ENCODE measurements at regions of chr4 and their contacts with region 1.

Region 1: GRCh38 chr4:38730830-38731646 is 51.8 kb downstream of the TLR10 start:
- DNase-seq: peak; percentile 91
- ATAC-seq: peak; percentile 93
- H3K4me3 Mint-ChIP-seq: no peak overlapping the region
- H3K27ac Mint-ChIP-seq: peak overlapping the region; percentile 64
- H3K4me1 Mint-ChIP-seq: peaks cover 15% of the 10 kb centered on the region
- H3K27me3 Mint-ChIP-seq: peaks cover 2% of the 10 kb centered on the region
- CTCF ChIP-seq: peak; percentile 99

Region 2: DNA sequence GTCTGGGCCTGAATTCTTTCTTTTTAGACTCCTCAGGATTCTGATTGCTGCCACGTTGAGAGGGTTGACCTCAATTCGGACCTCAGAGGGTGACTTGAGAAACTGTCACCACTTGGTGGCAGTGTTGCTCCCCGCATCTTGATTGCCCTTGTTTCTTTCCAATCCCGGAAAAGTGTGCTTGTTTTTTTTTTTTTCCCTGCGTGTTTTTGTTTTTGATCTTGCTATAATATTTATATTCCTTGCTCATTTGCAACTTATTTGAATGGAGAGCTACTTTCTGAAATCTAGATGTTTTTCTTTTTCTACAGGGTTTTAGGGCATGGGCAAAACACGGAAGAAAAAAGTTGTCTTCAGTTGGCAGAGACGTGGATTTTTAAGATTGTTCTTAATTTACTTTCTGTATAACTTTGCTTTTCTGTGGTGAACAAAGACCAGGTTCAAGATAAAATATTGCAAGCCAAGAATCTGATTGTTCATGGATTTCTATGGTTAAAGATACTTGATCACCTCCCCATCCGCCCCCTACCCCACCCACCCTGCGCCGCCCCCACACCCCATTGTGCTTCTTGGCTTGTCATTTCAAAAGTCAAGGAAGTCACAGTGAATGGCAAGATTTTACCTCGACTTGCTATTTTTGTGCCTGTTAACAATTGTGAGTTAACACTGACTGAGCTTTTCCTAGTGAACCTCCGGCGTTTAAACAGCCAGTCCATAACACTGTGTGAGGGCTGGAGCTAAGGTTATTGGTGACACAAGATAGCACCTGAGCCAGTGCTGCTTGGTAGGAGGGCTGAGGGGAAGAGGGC is 668.7 kb before region 1 on chr4:
- CTCF ChIA-PET with region 1: interaction called, 7 read pairs
- POLR2A ChIA-PET with region 1: no interaction called
- intact Hi-C with region 1: loop called (anchors 2 kb)
- DNase-seq: peak; percentile 78
- ATAC-seq: peak; percentile 62
- H3K4me3 Mint-ChIP-seq: peak overlapping the region; percentile 60
- H3K27ac Mint-ChIP-seq: peak overlapping the region; percentile 73
- H3K4me1 Mint-ChIP-seq: peaks cover 13% of the 10 kb centered on the region
- H3K27me3 Mint-ChIP-seq: no peaks in the 10 kb centered on the region
- CTCF ChIP-seq: peak; percentile 97

Region 3: GRCh38 chr4:38319456-38320342 is 411.3 kb before region 1 on chr4:
- CTCF ChIA-PET with region 1: interaction called, 3 read pairs
- POLR2A ChIA-PET with region 1: no interaction called
- intact Hi-C with region 1: loop called (anchors 10 kb)
- DNase-seq: peak; percentile 96
- ATAC-seq: peak; percentile 86
- H3K4me3 Mint-ChIP-seq: peak overlapping the region; percentile 76
- H3K27ac Mint-ChIP-seq: peak overlapping the region; percentile 89
- H3K4me1 Mint-ChIP-seq: peaks cover 39% of the 10 kb centered on the region
- H3K27me3 Mint-ChIP-seq: no peaks in the 10 kb centered on the region
- CTCF ChIP-seq: peak; percentile 96

Region 4: DNA sequence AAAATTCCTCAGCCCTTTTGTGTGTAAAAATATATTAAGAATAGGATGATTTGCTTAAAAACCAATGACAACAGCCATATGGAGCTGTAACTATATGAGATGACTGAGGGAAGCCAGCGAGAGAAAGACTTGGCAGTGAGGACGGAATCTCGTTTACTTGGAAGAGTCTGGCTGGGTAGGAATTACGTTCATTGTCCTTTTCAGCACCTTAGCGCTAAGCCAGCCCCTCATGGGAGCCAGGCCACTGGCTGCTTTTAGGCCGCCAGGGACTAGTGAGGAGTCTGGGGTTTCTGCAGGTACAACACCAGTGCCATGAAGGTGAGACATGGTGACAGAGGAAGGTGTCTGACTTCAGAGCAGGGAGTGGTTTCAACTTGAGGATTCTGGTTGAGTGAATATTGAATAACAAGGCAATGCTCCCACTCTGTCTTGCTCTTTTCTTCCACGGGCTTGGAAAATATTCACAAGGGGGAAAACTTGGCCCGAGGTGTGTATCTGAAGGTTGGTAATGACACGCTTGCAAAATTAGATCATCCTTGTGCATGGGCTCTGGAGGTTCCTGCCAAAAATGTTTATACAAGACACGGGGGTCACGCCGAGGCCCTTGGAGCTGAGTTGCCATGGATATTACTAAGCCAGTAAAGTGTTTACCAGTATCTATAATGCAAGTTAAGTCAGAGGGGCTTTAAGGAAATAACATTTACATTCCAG is 49.6 kb before region 1 on chr4:
- CTCF ChIA-PET with region 1: interaction called, 29 read pairs
- POLR2A ChIA-PET with region 1: no interaction called
- intact Hi-C with region 1: loop called (anchors 5 kb)
- DNase-seq: no peak
- ATAC-seq: no peak
- H3K4me3 Mint-ChIP-seq: no peak overlapping the region
- H3K27ac Mint-ChIP-seq: peak overlapping the region; percentile 69
- H3K4me1 Mint-ChIP-seq: peaks cover 71% of the 10 kb centered on the region
- H3K27me3 Mint-ChIP-seq: no peaks in the 10 kb centered on the region
- CTCF ChIP-seq: no peak

Region 5: GRCh38 chr4:38691251-38692008 is 39.6 kb before region 1 on chr4:
- CTCF ChIA-PET with region 1: interaction called, 13 read pairs
- POLR2A ChIA-PET with region 1: no interaction called
- intact Hi-C with region 1: no loop called
- DNase-seq: no peak
- ATAC-seq: no peak
- H3K4me3 Mint-ChIP-seq: no peak overlapping the region
- H3K27ac Mint-ChIP-seq: no peak overlapping the region
- H3K4me1 Mint-ChIP-seq: peaks cover 31% of the 10 kb centered on the region
- H3K27me3 Mint-ChIP-seq: no peaks in the 10 kb centered on the region
- CTCF ChIP-seq: no peak

Region 6: DNA sequence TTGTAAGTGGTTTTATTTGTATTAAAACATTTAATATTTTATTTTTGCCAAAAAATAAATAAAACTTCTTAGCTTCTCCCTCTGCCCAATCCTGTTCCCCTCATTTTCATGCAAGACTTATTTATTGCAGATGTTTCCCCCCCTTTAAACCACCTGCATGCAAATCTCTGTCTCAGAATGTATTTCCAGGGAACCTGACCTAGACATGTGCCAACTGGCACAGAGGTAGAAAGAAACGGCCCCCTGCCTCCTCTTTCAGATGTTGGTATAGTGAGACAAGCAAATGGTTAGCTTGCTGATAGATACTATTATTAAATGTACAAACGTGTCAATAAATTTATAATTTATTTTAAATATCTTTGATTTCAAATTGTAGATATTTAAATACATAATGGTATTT is 20.0 kb before region 1 on chr4:
- CTCF ChIA-PET with region 1: interaction called, 11 read pairs
- POLR2A ChIA-PET with region 1: no interaction called
- intact Hi-C with region 1: no loop called
- DNase-seq: no peak
- ATAC-seq: no peak
- H3K4me3 Mint-ChIP-seq: no peak overlapping the region
- H3K27ac Mint-ChIP-seq: no peak overlapping the region
- H3K4me1 Mint-ChIP-seq: peaks cover 11% of the 10 kb centered on the region
- H3K27me3 Mint-ChIP-seq: no peaks in the 10 kb centered on the region
- CTCF ChIP-seq: no peak

Region 7: DNA sequence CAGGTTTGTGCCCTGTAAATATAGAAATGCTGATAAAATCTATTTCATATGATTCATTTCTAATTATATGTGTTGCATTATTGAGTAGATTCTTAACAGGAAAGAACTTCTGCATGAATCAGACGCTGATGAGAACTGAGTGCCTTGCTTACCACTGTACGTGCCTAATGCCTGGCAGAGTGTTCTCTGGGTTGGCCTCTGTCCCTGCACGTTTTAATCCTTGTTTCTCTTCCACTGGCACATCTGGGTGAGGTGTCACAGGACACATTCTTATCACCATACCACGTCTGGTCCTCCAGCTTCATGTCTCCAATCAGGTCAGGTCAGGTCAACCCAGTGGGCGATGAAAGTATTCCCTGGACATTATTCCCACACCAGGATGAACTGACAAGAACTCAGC is 13.4 kb before region 1 on chr4:
- CTCF ChIA-PET with region 1: interaction called, 11 read pairs
- POLR2A ChIA-PET with region 1: no interaction called
- intact Hi-C with region 1: no loop called
- DNase-seq: no peak
- ATAC-seq: no peak
- H3K4me3 Mint-ChIP-seq: no peak overlapping the region
- H3K27ac Mint-ChIP-seq: no peak overlapping the region
- H3K4me1 Mint-ChIP-seq: no peaks in the 10 kb centered on the region
- H3K27me3 Mint-ChIP-seq: peaks cover 2% of the 10 kb centered on the region
- CTCF ChIP-seq: no peak

Region 8: GRCh38 chr4:39004758-39005157 is 273.7 kb after region 1 on chr4:
- CTCF ChIA-PET with region 1: no interaction called
- POLR2A ChIA-PET with region 1: no interaction called
- intact Hi-C with region 1: no loop called
- DNase-seq: no peak
- ATAC-seq: no peak
- H3K4me3 Mint-ChIP-seq: no peak overlapping the region
- H3K27ac Mint-ChIP-seq: no peak overlapping the region
- H3K4me1 Mint-ChIP-seq: peaks cover 9% of the 10 kb centered on the region
- H3K27me3 Mint-ChIP-seq: no peaks in the 10 kb centered on the region
- CTCF ChIP-seq: no peak

Measured in activated CD8-positive, alpha-beta T cell treated with anti-CD3 and anti-CD28 coated beads for 36 hours (primary cell).